H1 (cell line): ENCODE measurements at regions of chr21 and their contacts with region 1.

Region 1: DNA sequence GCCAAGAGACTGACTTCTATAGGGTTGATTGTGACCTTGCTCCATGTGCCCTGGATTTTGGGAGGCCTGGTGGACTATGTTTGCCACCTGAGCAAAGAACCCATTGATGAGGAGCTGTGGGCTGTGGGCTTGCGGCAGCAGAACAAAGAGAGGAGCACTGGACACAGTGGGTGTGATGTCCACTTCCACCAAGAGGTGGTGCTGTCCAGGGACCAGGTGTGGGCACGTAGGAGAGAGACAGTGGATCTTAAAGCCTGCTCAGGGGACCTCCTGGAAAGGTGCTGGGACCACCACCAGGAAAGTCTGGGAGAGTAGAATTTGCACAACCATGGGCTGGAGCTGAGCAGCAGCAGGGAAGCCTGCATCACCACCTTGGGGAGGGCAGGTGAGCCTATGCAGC is 106.7 kb upstream of the ETS2 start:
- DNase-seq: peak in 1 of 2 experiments; percentile 63
- H3K4me3 ChIP-seq: no peak overlapping the region
- H3K27ac ChIP-seq: no peak overlapping the region
- H3K4me1 ChIP-seq: no peaks in the 10 kb centered on the region; a peak in 1 of 7 replicates
- H3K27me3 ChIP-seq: no peaks in the 10 kb centered on the region
- CTCF ChIP-seq: peak; percentile 35 to 71 (median 69); a peak in 3 of 4 replicates
- EP300 ChIP-seq: no peak
- POLR2A ChIP-seq: no peak
- RAD21 ChIP-seq: peak; percentile 28 to 39; a peak in 3 of 4 replicates

Region 2: GRCh38 chr21:38683226-38683625 is 15.8 kb before region 1 on chr21:
- CTCF ChIA-PET with region 1: interaction called, 13 read pairs
- POLR2A ChIA-PET with region 1: no interaction called
- DNase-seq: no peak
- H3K4me3 ChIP-seq: no peak overlapping the region
- H3K27ac ChIP-seq: no peak overlapping the region
- H3K4me1 ChIP-seq: no peaks in the 10 kb centered on the region
- H3K27me3 ChIP-seq: no peaks in the 10 kb centered on the region
- CTCF ChIP-seq: no peak
- EP300 ChIP-seq: no peak
- POLR2A ChIP-seq: no peak
- RAD21 ChIP-seq: no peak

Region 3: GRCh38 chr21:38712071-38712470 is 13.0 kb after region 1 on chr21:
- CTCF ChIA-PET with region 1: interaction called, 10 read pairs
- POLR2A ChIA-PET with region 1: no interaction called
- DNase-seq: peak in 1 of 2 experiments; percentile 43
- H3K4me3 ChIP-seq: no peak overlapping the region
- H3K27ac ChIP-seq: no peak overlapping the region
- H3K4me1 ChIP-seq: no peaks in the 10 kb centered on the region
- H3K27me3 ChIP-seq: no peaks in the 10 kb centered on the region
- CTCF ChIP-seq: peak; percentile 53 to 83 (median 82)
- EP300 ChIP-seq: no peak
- POLR2A ChIP-seq: no peak
- RAD21 ChIP-seq: peak; percentile 77 to 81

Region 4: DNA sequence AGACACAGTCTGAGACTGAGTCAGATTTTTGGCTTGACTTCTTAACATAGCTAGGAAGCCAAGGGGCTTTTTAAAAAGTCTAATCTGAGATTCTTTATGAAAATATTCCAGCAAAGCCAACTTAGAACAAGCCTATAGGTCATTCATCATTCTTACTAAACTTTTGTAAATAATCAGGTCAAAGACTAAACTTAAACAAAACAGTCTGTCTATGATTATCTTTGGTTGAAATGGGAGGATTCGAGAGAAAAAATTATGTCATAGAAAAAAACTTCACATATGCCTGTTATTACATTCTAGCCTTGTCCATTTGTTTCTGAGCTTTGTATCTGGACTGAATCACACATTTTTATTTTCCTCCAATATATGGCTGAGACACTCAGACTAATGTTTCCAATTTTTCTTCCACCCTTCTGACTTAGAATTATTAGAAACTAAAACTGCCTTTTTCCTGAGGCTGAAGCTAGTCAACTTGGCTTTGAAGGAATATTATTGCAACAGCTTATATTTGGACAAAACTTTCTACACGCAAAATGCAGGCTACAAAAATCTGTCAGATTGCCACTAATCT is 190.0 kb after region 1 on chr21:
- CTCF ChIA-PET with region 1: no interaction called
- POLR2A ChIA-PET with region 1: no interaction called
- DNase-seq: no peak
- H3K4me3 ChIP-seq: no peak overlapping the region
- H3K27ac ChIP-seq: no peak overlapping the region
- H3K4me1 ChIP-seq: no peaks in the 10 kb centered on the region
- H3K27me3 ChIP-seq: no peaks in the 10 kb centered on the region
- CTCF ChIP-seq: no peak
- EP300 ChIP-seq: no peak
- POLR2A ChIP-seq: no peak
- RAD21 ChIP-seq: no peak